ENCODE measurements at regions of chr4 and their contacts with region 1.

Region 1: DNA sequence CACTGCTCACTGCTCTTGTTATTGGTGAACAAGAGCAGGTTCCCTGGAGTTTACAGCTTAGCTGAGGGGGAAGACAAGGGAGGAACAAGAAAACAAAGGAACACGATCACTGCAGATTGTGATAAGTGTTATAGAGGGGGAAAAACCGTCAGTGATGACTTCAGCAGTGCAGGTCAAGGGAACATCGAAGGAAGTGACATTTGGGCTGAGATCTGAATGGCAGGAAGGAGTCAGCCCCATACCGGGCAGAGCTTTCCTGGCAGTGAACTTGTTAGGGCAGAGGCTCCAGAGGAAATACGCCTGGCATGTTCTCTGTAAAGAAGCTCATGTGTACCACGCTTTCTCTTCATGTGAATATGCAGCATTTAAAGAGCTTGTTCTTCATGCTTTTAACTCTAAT is 78.1 kb downstream of the LDB2 start:
- DNase-seq: peak in 3 of 5 donors; percentile 31 to 38 (median 32)
- ATAC-seq: peak; percentile 63 to 95 (median 78)
- H3K4me3 ChIP-seq: no peak overlapping the region
- H3K27ac ChIP-seq: peak overlapping the region in 10 of 12 donors; percentile 7 to 82 (median 57)
- H3K4me1 ChIP-seq: peaks cover 0 to 16% (median 3%) of the 10 kb centered on the region in 12 donors
- H3K27me3 ChIP-seq: no peaks in the 10 kb centered on the region
- CTCF ChIP-seq: no peak
- POLR2A ChIP-seq: no peak

Region 2: GRCh38 chr4:16733509-16733908 is 86.8 kb before region 1 on chr4:
- intact Hi-C with region 1: loop called in 1 of 10 experiments (anchors 5 kb)
- DNase-seq: no peak
- ATAC-seq: no peak
- H3K4me3 ChIP-seq: no peak overlapping the region
- H3K27ac ChIP-seq: no peak overlapping the region
- H3K4me1 ChIP-seq: peaks cover 0 to 8% (median 3%) of the 10 kb centered on the region in 12 donors
- H3K27me3 ChIP-seq: no peaks in the 10 kb centered on the region
- CTCF ChIP-seq: no peak
- POLR2A ChIP-seq: no peak

Region 3: DNA sequence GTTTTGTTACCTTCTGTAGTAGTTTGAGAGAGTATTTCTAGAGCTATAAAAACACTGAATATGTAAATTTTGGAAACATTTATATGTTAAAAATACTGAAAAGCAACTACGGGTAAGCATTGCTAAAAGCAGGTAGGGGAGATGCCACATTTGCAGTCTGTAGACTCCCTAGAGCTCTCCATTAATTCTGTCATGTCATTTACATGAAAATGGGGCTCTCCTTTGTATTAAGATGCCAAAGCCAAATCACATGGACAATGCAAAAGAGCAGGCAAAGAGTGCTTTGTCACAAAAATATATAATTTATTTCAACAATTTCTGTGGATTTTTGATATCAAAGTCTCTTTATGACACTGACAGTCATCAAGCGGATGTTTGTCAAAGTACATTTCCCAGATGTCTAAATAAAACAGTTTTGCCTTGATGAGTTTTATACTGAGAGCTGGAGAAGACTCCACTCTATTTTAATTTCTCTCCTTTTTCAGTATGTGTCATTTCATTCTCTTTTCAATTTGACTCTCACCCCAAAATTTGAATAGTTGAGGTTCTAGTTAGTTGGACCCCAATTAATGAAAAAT is 26.3 kb after region 1 on chr4:
- intact Hi-C with region 1: no loop called
- DNase-seq: no peak
- ATAC-seq: no peak
- H3K4me3 ChIP-seq: no peak overlapping the region
- H3K27ac ChIP-seq: peak overlapping the region in 2 of 12 donors; percentile 5 to 23
- H3K4me1 ChIP-seq: peaks cover 0 to 27% (median 11%) of the 10 kb centered on the region in 12 donors
- H3K27me3 ChIP-seq: no peaks in the 10 kb centered on the region
- CTCF ChIP-seq: no peak
- POLR2A ChIP-seq: no peak

Region 4: DNA sequence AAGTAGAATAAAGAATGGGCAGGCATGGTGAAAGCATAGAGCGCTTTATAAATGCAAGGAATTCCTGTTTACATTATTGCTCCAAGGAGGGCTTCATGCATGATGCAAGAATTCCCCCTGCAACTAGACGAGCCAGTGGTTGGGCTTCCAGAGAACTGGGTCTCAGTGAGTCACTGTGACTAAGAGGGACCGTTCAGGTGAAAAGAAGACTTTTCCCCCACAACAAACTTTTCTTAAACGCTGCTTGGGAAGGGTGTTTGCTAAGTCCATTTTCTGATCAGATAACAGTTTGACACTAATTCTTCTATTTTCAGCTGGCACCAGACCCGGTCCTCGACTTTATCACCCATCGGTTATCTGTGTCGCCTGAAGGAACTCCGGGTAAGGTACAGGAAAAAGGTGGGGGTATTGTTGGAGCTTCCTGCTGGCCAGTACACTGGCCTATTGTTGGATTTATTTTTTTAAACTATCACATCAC is 38.0 kb after region 1 on chr4:
- intact Hi-C with region 1: loop called in 3 of 10 experiments (anchors 5 kb)
- DNase-seq: peak in 4 of 5 donors; percentile 39 to 71 (median 61)
- ATAC-seq: peak; percentile 83 to 93 (median 86)
- H3K4me3 ChIP-seq: no peak overlapping the region
- H3K27ac ChIP-seq: peak overlapping the region in 11 of 12 donors; percentile 65 to 91 (median 76)
- H3K4me1 ChIP-seq: peaks cover 0 to 42% (median 6%) of the 10 kb centered on the region in 12 donors
- H3K27me3 ChIP-seq: no peaks in the 10 kb centered on the region
- CTCF ChIP-seq: no peak
- POLR2A ChIP-seq: no peak

Region 5: GRCh38 chr4:16897991-16898827 is 77.9 kb after region 1 on chr4 and contains the start of gene LDB2:
- intact Hi-C with region 1: loop called in 2 of 10 experiments (anchors 5 to 10 kb)
- DNase-seq: peak; percentile 67 to 85 (median 78)
- ATAC-seq: peak; percentile 92 to 96 (median 92)
- H3K4me3 ChIP-seq: peak within 1 kb of the TSS; percentile 34 to 87 (median 62)
- H3K27ac ChIP-seq: peak within 1 kb of the TSS; percentile 46 to 87 (median 77)
- H3K4me1 ChIP-seq: peaks cover 0 to 25% (median 5%) of the 10 kb centered on the region in 12 donors
- H3K27me3 ChIP-seq: no peaks in the 10 kb centered on the region
- CTCF ChIP-seq: no peak
- POLR2A ChIP-seq: no peak
- total RNA-seq, gene LDB2: 9.5 to 38.7 (median 26.6) TPM